Right ventricle myocardium inferior (tissue), 1 donor: ENCODE measurements at regions of chr16 and their contacts with region 1.

Region 1: DNA sequence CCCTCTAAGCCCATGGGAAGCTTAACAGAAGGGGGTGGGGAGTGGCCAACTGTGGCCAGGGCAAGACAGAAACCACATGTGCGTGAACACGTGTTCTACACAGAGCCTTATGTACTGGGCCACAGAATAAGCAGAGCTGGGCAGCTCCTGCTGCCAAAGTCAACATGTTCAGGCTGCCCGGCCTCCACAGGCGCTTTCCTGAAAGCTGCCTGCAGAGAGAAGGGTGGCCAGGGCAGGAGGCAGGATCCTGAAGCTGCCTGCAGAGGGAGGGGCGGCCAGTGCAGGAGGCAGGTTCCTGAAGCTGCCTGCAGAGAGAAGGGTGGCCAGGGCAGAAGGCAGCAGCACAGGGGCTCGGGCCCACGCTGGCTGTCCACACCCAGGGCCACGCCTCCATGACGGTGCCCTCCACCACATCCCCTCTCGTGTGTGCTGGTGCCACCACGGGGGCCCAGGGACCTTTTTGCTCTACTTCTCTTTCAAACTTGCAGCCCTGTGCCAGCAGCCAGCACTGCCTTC is 79.5 kb downstream of the ANKRD11 start:
- DNase-seq: no peak
- ATAC-seq: peak; percentile 72

Region 2: GRCh38 chr16:88967830-88968588 is 442.8 kb before region 1 on chr16:
- intact Hi-C with region 1: loop called (anchors 10 kb)
- DNase-seq: peak; percentile 39
- ATAC-seq: no peak

Region 3: DNA sequence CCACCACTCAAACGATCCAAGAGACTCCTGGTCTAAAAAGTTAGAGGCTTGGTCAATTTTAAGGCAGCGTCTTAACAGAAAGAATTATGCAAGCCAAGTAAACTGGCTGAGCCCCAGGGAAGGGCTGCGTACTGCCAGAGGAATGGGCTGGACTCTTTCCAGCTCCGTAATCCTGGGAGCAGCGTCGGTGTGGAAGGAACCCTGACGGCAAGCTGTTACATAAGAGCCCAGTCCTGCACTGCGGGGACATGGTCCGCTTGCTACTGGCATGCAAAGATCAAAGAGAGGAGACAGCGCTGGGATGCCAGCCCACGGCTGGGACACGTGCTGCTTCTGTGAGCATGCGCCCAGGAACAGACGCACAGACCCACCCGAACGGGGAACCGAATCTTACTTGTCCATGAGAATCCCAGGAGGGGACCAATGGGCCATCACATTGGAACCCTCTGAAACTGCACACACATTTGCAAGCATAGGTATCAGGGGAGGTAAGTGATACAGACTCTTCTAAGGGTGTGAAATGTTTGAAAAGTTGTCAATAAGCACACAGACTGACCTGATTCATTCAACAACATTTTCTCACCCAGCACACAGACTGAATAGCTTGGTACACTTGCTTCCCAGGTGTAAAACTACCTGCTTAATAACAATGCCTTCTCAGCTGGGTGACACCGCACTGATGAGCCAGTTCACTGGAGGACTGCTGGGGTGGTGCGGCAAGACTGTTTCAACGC is 15.5 kb before region 1 on chr16:
- intact Hi-C with region 1: no loop called
- DNase-seq: peak; percentile 89
- ATAC-seq: peak; percentile 94

Region 4: GRCh38 chr16:89442990-89443731 is 32.3 kb after region 1 on chr16:
- intact Hi-C with region 1: loop called (anchors 5 kb)
- DNase-seq: peak; percentile 65
- ATAC-seq: peak; percentile 47

Region 5: DNA sequence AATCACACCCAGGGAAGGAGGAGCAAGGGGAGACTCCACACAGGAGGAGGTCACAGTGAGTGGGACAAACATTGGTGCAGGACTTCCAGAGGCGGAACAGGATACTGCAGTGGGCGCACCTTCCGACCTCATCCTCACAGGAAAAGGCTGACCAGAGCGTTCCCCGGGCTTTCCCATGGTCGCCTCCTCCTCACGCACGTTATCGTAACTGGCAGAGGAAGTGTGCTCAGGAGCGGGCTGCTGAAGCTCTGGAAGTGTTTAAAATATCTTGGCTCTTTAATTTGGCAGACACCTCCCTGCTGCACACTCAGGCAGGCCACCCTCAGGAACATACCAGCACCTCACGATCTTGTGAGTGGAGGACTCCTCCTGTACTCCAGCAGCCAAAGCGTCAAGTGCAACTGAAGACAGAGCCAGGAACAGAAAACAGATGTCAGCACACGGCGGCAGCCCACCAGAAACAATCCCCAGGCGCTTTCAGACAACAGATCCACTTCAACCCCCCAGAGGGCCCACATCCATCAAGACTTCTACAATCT is 388.0 kb after region 1 on chr16:
- intact Hi-C with region 1: no loop called
- DNase-seq: no peak
- ATAC-seq: peak; percentile 87